ENCODE measurements at regions of chr1 and their contacts with region 1.

Region 1: GRCh38 chr1:204806943-204807687 is 63.5 kb upstream of the NFASC start:
- DNase-seq: peak; percentile 92
- ATAC-seq: peak; percentile 84
- H3K4me3 Mint-ChIP-seq: peak overlapping the region; percentile 77
- H3K27ac Mint-ChIP-seq: no peak overlapping the region
- H3K4me1 Mint-ChIP-seq: peaks cover 13% of the 10 kb centered on the region
- H3K27me3 Mint-ChIP-seq: peaks cover 15% of the 10 kb centered on the region
- CTCF ChIP-seq: peak; percentile 99

Region 2: GRCh38 chr1:204560590-204561150 is 246.4 kb before region 1 on chr1:
- CTCF ChIA-PET with region 1: interaction called, 216 read pairs
- POLR2A ChIA-PET with region 1: interaction called, 5 read pairs
- DNase-seq: no peak
- ATAC-seq: peak; percentile 66
- H3K4me3 Mint-ChIP-seq: no peak overlapping the region
- H3K27ac Mint-ChIP-seq: peak overlapping the region; percentile 8; the same call in 1 of the 2 replicates
- H3K4me1 Mint-ChIP-seq: peaks cover 28% of the 10 kb centered on the region
- H3K27me3 Mint-ChIP-seq: no peaks in the 10 kb centered on the region
- CTCF ChIP-seq: no peak

Region 3: GRCh38 chr1:204591594-204592051 is 215.5 kb before region 1 on chr1:
- CTCF ChIA-PET with region 1: interaction called, 10 read pairs
- POLR2A ChIA-PET with region 1: no interaction called
- DNase-seq: no peak
- ATAC-seq: no peak
- H3K4me3 Mint-ChIP-seq: no peak overlapping the region
- H3K27ac Mint-ChIP-seq: no peak overlapping the region
- H3K4me1 Mint-ChIP-seq: peaks cover 19% of the 10 kb centered on the region
- H3K27me3 Mint-ChIP-seq: no peaks in the 10 kb centered on the region
- CTCF ChIP-seq: no peak

Region 4: DNA sequence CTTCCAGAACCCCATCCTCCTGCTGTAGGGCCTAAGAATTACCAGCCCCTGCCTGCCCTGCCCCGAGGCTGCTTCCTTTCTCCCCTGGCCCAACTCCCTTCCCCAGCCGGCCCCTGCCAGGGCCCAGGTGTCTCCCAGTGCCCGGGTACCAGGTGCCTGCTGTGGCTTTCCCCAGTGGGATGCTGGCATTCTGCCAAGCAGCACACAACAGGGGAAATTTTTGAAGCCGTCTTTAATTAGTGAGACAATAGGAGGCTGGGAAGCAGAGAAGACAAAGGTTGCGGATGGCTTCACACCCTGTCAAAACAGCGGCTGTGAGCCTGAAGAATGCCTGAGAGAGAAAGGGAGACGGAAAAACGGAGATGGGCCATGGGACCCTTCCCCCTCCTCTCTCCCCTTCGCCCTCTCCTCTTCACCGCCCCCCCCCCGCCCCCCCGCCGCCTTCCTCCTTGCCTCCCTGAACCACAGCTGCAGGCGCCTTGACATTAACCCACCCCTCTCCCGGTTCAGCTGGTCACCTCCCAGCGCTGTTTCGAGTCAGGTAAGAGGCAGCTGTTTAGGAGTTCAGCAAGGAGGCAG is 155.2 kb before region 1 on chr1:
- CTCF ChIA-PET with region 1: interaction called, 42 read pairs
- POLR2A ChIA-PET with region 1: no interaction called
- DNase-seq: peak; percentile 50
- ATAC-seq: peak; percentile 72
- H3K4me3 Mint-ChIP-seq: peak overlapping the region; percentile 43
- H3K27ac Mint-ChIP-seq: no peak overlapping the region
- H3K4me1 Mint-ChIP-seq: peaks cover 43% of the 10 kb centered on the region
- H3K27me3 Mint-ChIP-seq: peaks cover 18% of the 10 kb centered on the region
- CTCF ChIP-seq: no peak

Region 5: DNA sequence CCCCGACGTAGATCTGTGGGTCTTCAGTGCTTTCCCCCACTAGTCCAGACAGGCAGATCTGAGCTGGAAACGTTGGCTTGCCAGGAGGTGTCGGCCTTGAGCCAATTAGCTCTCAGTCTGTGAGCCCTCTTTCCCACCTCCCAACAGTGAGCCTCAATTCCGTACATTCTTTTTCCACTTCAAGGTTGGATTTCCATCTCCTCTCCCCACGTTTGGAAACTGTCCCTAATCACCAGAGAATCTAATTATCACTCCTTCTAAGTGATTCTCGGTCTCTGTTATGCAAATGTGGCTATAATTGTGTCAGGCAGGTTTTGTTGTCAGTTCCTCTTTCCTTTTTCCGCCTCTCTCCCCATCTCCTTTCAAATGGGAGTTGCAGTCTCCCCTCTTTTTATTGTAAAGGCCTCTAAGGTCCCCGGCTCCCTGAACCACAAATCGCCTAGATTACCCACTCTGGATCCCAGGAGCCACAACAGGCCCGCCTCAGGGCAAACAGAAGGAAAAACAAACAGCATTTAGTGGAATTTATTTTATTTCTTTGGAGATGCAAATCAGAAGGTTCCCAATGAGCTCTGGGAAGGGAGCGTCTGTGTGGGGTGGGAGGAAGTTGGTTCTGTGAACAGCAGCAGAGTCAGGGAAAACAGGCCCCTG is 92.1 kb before region 1 on chr1:
- CTCF ChIA-PET with region 1: interaction called, 73 read pairs
- POLR2A ChIA-PET with region 1: no interaction called
- DNase-seq: peak; percentile 68
- ATAC-seq: peak; percentile 55
- H3K4me3 Mint-ChIP-seq: peak overlapping the region; percentile 50
- H3K27ac Mint-ChIP-seq: peak overlapping the region; percentile 86
- H3K4me1 Mint-ChIP-seq: peaks cover 66% of the 10 kb centered on the region
- H3K27me3 Mint-ChIP-seq: peaks cover 94% of the 10 kb centered on the region
- CTCF ChIP-seq: no peak

Region 6: DNA sequence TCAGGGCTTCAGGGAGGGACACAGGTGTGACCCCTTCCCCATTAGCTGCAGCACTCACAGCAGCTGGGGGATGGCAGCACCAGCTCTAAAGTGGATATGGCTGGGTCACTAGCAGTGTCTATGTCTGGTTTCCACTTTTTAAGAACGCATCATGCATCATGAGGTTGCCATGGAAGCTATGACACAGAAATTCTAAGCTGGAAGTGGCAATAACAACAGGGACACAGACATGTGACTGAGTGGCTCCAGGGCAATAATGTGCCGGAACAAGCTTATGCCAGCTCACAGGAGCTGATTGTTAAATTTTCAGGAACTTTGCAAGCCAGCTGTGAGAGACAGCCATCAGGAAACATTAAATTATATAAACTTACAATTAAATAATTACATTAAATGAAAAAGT is 12.4 kb after region 1 on chr1:
- CTCF ChIA-PET with region 1: interaction called, 35 read pairs
- POLR2A ChIA-PET with region 1: no interaction called
- DNase-seq: no peak
- ATAC-seq: no peak
- H3K4me3 Mint-ChIP-seq: no peak overlapping the region
- H3K27ac Mint-ChIP-seq: no peak overlapping the region
- H3K4me1 Mint-ChIP-seq: no peaks in the 10 kb centered on the region
- H3K27me3 Mint-ChIP-seq: peaks cover 5% of the 10 kb centered on the region; the same call in 1 of the 2 replicates
- CTCF ChIP-seq: no peak

Region 7: GRCh38 chr1:204989266-204990058 is 182.3 kb after region 1 on chr1:
- CTCF ChIA-PET with region 1: interaction called, 10 read pairs
- POLR2A ChIA-PET with region 1: no interaction called
- DNase-seq: peak; percentile 85
- ATAC-seq: peak; percentile 87
- H3K4me3 Mint-ChIP-seq: no peak overlapping the region
- H3K27ac Mint-ChIP-seq: no peak overlapping the region
- H3K4me1 Mint-ChIP-seq: peaks cover 35% of the 10 kb centered on the region
- H3K27me3 Mint-ChIP-seq: peaks cover 20% of the 10 kb centered on the region
- CTCF ChIP-seq: peak; percentile 95